KBM-7 (cell line): ENCODE measurements at regions of chr16 and their contacts with region 1.

Region 1: GRCh38 chr16:57591086-57591869 is 37.2 kb upstream of the ADGRG1 start:
- DNase-seq: peak; percentile 91

Region 2: DNA sequence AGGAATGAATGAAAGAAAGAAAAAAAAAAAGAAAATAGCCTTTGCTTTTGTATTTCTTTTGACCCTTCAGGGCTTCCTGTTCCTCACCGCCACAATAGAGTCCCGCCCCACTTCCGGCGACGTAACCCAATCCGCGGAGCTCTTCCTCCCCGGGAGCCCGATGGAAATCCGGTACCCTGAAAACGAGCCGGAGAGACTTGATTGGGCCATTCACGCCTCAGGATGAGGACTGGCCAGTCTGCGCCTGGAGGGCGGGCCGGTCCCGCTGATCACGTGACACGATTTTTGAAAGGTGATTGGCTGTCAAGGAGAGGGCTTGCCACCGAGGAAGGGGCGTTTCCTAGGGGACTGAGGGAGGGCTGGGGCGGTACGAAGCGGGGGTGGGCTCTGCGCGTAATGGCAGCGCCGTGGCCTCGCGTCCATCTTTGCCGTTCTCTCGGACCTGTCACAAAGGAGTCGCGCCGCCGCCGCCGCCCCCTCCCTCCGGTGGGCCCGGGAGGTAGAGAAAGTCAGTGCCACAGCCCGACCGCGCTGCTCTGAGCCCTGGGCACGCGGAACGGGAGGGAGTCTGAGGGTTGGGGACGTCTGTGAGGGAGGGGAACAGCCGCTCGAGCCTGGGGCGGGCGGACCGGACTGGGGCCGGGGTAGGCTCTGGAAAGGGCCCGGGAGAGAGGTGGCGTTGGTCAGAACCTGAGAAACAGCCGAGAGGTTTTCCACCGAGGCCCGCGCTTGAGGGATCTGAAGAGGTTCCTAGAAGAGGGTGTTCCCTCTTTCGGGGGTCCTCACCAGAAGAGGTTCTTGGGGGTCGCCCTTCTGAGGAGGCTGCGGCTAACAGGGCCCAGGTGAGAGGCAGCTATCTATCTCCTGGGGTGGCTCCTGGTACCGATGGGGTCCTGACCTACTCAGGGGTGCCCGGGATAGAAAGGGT is 405.1 kb before region 1 on chr16 and contains the starts of genes PSME3IP1 and RSPRY1:
- in situ Hi-C with region 1: no loop called
- DNase-seq: peak; percentile 99

Region 3: GRCh38 chr16:57648590-57649442 is 57.5 kb after region 1 on chr16:
- in situ Hi-C with region 1: loop called (anchors 10 kb)
- DNase-seq: peak; percentile 98